Calu3 (cell line): ENCODE measurements at regions of chr18 and their contacts with region 1.

Region 1: DNA sequence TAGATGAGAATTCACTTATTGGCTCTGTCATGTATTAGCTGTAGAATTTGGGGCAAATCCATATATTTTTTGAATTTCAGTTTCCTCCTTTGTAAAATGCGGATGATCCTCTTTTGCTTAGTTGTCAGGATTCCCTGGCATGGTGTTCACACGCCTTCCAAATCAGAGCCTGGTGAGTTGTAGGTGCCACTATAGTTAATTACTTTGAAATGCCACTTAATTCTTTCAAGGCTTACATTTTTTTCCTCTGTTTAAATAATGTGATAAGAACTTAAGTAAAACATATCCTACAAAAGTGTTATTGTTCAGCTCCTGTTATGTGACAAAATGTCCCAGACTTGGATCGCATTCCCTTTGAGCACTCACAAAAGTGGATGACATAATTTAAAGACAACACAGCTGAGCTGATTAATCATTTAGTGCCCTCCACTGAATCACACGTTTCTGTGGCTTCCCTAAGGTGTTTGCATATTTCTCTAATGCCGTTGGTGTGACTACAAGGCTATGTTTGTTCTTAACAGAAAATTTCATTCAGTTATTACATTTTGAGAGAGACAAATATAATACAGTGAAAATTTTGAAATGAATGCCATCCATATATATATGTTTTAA is 471.2 kb upstream of the CHST9 start:
- DNase-seq: peak; percentile 57
- H3K4me3 Mint-ChIP-seq: no peak overlapping the region
- H3K27ac Mint-ChIP-seq: peak overlapping the region; percentile 85
- H3K4me1 Mint-ChIP-seq: peaks cover 56% of the 10 kb centered on the region
- H3K27me3 Mint-ChIP-seq: no peaks in the 10 kb centered on the region
- CTCF ChIP-seq: no peak

Region 2: GRCh38 chr18:27619090-27619772 is 37.0 kb before region 1 on chr18:
- CTCF ChIA-PET with region 1: interaction called, 4 read pairs
- intact Hi-C with region 1: loop called (anchors 2 kb)
- DNase-seq: peak; percentile 50
- H3K4me3 Mint-ChIP-seq: peak overlapping the region; percentile 11
- H3K27ac Mint-ChIP-seq: peak overlapping the region; percentile 38
- H3K4me1 Mint-ChIP-seq: peaks cover 15% of the 10 kb centered on the region
- H3K27me3 Mint-ChIP-seq: no peaks in the 10 kb centered on the region
- CTCF ChIP-seq: no peak

Region 3: DNA sequence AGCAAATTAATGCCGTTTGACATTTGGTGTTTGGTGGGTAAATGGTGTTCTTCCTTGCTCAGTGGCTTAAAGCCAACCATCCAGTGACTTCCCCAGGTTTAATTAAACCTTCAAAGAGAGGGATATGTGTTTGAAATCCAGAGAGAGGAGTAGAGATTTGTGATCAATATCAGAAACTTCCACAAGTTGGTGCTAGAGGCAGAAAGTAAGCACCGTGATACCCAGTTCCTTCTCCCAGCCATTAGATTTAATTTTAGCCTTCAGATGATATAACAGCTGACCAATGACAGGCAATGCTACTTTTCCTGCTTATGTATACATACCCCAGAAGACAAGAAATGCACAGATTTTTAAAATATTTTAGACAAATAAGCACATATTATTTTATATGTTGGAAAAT is 122.2 kb after region 1 on chr18:
- CTCF ChIA-PET with region 1: no interaction called
- intact Hi-C with region 1: no loop called
- DNase-seq: no peak
- H3K4me3 Mint-ChIP-seq: no peak overlapping the region
- H3K27ac Mint-ChIP-seq: no peak overlapping the region
- H3K4me1 Mint-ChIP-seq: no peaks in the 10 kb centered on the region
- H3K27me3 Mint-ChIP-seq: no peaks in the 10 kb centered on the region
- CTCF ChIP-seq: no peak

Region 4: DNA sequence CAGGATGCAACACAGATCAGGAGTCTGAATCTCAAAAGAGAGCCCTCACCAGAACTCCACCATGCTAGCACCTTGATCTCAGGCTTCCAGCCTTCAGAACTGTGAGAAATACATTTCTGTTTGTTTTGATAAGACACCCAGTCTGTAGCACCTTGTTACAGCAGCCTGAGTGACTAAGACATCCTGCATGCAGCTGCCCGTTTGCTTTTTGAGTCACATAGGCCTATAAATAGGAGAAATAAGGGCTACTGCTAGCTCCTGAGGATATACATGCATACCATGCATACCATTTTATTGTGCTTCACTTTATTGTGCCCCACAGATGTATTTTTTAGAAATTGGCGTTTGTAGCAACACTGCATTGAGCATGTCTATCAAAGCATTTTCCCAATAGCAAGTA is 182.9 kb after region 1 on chr18:
- CTCF ChIA-PET with region 1: no interaction called
- intact Hi-C with region 1: no loop called
- DNase-seq: peak; percentile 35
- H3K4me3 Mint-ChIP-seq: no peak overlapping the region
- H3K27ac Mint-ChIP-seq: no peak overlapping the region
- H3K4me1 Mint-ChIP-seq: peaks cover 31% of the 10 kb centered on the region
- H3K27me3 Mint-ChIP-seq: no peaks in the 10 kb centered on the region
- CTCF ChIP-seq: no peak